Right ventricle myocardium inferior (tissue), 1 donor: ENCODE measurements at regions of chr17 and their contacts with region 1.

Region 1: DNA sequence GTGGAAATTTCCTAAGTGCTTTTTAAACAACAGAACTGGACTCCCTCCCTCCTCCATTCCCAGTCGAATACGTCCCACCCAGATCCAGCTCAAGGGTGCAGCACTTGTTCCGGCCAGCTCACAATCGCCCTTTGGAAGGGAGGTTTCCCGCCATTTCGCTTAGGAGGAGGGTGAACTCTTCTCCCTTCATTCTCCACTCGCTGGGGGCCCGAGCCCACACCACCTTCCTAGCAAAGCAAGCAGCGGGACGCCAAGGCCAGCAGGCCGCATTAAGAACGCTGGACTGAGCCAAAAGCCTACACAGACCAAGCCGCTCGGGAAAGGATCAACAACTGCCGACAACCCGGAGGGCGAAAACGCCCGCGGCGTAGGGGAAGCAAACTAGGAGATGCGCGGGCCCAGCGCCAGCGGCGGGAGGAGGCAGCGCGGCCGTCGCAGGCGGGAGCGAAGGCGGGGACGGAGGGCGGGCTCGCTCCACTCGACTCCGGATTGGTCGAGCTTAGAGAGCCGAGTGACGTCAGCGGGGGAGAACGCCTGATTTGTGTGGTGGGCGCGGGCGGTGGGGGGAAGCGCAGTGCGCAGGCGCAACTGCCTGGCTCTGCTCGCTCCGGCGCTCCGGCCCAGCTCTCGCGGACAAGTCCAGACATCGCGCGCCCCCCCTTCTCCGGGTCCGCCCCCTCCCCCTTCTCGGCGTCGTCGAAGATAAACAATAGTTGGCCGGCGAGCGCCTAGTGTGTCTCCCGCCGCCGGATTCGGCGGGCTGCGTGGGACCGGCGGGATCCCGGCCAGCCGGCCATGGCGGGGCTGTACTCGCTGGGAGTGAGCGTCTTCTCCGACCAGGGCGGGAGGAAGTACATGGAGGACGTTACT is at the start of gene PPM1D:
- DNase-seq: peak; percentile 100
- ATAC-seq: peak; percentile 99
- total RNA-seq, gene PPM1D: 7.4 TPM

Region 2: DNA sequence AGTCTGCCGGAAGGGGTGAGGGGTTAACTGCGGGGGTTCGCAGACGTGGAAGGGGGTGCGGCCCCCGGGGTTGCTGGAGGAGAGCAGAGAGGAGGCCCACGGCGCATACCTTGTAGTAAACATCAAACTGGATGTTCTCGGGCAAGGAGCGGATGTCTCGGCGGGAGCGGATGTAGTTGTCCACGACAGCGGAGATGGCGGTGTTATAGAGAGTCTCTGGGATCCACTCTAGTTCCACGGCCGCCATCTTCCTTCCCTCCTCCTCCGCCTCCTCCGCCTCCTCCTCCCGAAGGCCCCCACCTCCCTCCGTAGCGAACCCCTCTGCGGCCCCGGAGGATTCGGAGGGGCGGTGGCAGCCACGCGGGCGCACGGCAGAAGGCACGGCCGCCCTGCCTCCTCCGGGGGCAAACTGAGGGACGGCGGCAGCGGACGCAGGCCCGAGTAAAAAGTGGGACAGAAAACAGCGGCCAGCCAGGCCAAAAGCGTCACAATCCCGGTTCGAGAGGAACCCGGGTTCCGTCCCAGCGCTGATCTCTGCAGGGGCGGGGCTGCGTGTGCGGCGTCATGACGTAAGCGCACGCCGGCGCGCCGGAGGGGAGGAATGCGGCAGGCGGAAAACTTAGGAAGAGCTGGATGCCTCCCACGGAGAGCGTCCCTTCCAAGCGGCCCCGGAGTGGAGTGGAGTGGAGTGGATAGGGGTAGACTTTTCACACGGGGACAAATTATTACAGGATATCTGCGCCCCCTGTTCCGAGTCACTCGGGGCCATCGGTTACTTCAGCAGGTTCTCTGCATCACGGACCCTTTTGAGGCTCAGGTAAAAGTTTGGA is 74.0 kb before region 1 on chr17 and contains the start of gene APPBP2:
- intact Hi-C with region 1: loop called (anchors 2 kb)
- DNase-seq: peak; percentile 94
- ATAC-seq: peak; percentile 98
- total RNA-seq, gene APPBP2: 16.7 TPM

Region 3: DNA sequence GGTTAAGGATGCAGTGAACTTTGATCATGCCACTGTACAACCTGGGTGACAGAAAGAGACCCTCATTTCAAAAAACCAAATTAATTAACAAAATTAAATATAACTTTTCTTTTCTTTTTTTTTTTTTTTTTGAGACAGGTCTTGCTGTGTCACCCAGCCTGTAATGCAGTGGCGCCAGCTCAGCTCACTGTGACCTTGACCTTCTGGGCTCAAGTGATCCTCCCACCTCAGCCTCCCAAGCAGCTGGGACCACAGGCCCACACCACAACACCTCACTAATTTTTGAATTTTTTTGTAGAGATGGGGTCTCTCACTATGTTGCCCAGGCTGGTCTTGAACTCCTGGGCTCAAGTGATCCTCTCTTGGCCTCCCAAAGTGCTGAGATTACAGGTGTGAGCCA is 31.3 kb before region 1 on chr17:
- intact Hi-C with region 1: loop called (anchors 5 kb)
- DNase-seq: no peak
- ATAC-seq: no peak

Region 4: DNA sequence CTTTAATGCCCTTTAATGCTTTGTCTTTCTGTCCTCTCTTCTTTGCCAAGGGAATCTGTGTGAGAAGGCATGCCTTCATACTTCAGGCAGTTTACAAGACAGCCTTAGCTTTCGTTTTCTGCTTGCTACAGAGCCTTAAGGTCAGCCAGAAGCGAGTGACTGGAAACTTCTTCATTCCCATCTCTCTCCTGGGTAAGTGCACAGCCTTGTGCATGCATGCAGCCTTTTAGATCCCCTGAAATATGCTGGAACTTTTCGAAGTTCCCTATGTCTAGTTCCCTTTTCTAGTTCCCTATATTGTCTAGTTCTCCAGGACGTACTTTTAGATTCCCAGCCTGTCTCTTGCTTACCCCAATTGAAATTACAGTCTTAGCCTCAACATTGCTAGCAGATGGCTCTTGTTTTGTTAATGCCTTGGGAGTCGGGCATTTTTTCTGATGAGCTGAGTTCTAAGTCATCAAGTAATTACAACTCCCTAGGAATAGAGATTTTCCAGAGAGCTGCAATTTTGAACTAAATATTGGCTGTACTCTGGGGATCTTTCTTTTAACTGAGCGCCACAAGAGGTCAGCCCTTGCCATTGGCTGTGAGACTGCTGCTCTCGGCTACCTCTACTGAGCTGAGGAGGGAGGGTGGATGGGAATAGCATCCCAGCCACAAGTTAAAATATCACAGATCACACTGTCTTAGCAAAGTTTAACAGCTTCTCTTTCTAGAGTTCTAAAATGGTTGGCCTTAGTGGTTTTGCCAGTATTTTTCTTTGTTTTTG is 22.5 kb before region 1 on chr17:
- intact Hi-C with region 1: loop called (anchors 2 kb)
- DNase-seq: no peak
- ATAC-seq: peak; percentile 90

Region 5: DNA sequence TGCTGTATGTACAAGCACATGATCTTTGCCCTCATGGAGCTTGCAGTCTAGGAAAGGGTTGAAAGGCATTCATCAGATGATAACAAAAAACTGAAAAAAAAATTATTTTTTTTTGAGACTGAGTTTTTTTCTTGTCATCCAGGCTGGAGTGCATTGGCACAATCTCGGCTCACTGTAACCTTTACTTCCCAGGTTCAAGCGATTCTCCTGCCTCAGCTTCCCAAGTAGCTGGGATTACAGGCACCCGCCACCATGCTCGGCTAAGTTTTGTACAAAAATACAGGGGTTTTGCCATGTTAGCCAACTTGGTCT is 39.1 kb after region 1 on chr17:
- intact Hi-C with region 1: loop called (anchors 5 kb)
- DNase-seq: no peak
- ATAC-seq: no peak

Region 6: GRCh38 chr17:60677308-60678124 is 77.7 kb after region 1 on chr17 and contains the start of gene BCAS3:
- intact Hi-C with region 1: loop called (anchors 2 kb)
- DNase-seq: peak; percentile 98
- ATAC-seq: peak; percentile 99
- total RNA-seq, gene BCAS3: 13.3 TPM

Region 7: GRCh38 chr17:60750640-60751039 is 150.8 kb after region 1 on chr17:
- intact Hi-C with region 1: no loop called
- DNase-seq: no peak
- ATAC-seq: no peak